ENCODE measurements at regions of chr6 and their contacts with region 1.

Region 1: DNA sequence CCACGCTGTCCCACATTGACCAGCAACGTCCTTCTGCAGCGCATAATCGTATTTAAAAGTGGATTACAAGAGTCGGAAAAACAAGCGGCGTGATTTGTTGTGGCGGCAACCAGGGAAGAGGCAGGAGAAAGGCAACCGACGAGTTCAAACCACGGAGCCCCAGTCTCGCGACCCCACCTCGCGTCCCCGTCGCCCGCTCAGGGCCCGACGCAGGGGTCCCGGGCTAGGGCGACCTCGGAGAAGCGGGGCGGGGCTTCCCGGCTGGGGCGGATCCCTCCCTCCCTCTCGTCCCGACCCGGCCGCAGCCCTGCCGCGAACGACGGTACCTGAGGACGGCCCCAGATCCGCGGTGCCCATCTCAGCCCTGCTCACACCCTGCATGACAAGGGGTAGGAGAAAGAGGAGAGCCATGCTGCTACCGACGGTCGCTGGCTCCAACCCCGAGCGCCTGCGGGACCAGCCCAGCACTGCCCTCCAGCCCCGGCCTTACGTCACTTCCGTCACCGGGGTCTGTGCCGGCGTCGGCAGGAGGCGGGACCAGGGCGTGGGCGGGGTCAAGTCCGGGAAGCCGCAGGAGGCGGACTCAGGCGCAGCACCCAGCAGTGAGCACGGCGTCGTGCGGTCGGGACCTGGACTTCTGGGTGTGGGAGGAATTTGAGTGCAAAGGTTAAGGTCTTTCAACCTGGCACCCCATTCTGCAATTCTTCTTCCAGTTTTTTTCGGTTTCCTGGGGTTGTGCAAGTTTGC is at the start of gene IFNGR1:
- DNase-seq: peak; percentile 90
- H3K4me3 ChIP-seq: peak within 1 kb of the TSS; percentile 78 to 98 (median 89)
- H3K27ac ChIP-seq: peak within 1 kb of the TSS; percentile 98
- H3K4me1 ChIP-seq: peaks cover 44% of the 10 kb centered on the region
- H3K27me3 ChIP-seq: no peaks in the 10 kb centered on the region
- CTCF ChIP-seq: no peak
- total RNA-seq, gene IFNGR1: 54.7 to 137 TPM

Region 2: DNA sequence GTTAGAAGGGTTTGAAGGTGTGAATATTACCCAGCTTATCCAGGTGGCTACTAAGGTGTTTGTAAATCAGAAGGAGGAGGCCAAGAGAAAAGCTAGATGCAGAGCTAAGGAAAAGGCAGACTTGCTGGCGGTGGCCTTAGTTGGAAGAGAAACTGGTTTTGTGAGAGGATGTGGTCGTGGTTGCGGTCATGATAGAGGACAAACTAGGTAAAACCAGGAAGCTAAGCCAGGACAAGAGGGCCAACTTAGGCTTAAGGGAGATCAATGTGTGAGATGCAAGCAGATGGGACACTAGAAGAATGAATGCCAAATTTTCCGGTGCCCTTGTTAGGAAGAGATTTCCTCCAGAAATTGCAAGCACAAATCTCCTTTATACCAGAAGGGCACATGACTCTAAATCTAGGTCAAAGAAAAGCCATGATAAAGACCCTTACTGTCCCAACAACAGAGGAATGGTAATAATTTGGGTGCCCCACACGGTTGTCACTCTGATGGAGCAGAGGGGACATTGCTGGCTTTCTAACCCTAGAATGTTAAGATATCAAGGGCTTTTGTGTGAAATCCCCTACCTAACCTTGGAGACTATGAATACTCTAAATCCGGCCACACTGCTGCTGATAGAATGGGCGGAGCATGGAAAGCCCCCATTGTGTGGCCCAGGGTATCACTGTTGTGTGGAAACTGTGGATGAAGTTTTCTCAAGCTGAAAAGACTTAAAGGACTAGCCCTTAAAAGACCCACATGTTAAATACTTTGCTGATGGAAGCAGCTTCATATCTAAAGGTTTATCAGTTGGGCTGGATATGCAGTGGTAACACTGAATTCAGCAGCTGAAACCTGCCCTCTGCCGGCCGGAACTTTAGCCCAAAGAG is 53.5 kb before region 1 on chr6:
- CTCF ChIA-PET with region 1: no interaction called
- dilution Hi-C with region 1: no loop called
- in situ Hi-C with region 1: no loop called
- intact Hi-C with region 1: loop called (anchors 2 kb)
- DNase-seq: peak; percentile 25
- H3K4me3 ChIP-seq: no peak overlapping the region
- H3K27ac ChIP-seq: no peak overlapping the region
- H3K4me1 ChIP-seq: peaks cover 16% of the 10 kb centered on the region
- H3K27me3 ChIP-seq: no peaks in the 10 kb centered on the region
- CTCF ChIP-seq: peak; percentile 34 to 58

Region 3: GRCh38 chr6:137240168-137240567 is 21.1 kb after region 1 on chr6:
- CTCF ChIA-PET with region 1: no interaction called
- dilution Hi-C with region 1: no loop called
- in situ Hi-C with region 1: no loop called
- intact Hi-C with region 1: loop called (anchors 1 kb)
- DNase-seq: peak; percentile 91
- H3K4me3 ChIP-seq: no peak overlapping the region
- H3K27ac ChIP-seq: no peak overlapping the region
- H3K4me1 ChIP-seq: peaks cover 43% of the 10 kb centered on the region
- H3K27me3 ChIP-seq: no peaks in the 10 kb centered on the region
- CTCF ChIP-seq: no peak

Region 4: GRCh38 chr6:137271245-137272183 is 52.4 kb after region 1 on chr6:
- CTCF ChIA-PET with region 1: no interaction called
- dilution Hi-C with region 1: no loop called
- in situ Hi-C with region 1: no loop called
- intact Hi-C with region 1: loop called (anchors 2 kb)
- DNase-seq: peak; percentile 41
- H3K4me3 ChIP-seq: no peak overlapping the region
- H3K27ac ChIP-seq: no peak overlapping the region
- H3K4me1 ChIP-seq: no peaks in the 10 kb centered on the region
- H3K27me3 ChIP-seq: no peaks in the 10 kb centered on the region
- CTCF ChIP-seq: peak; percentile 92 to 98

Measured in mammary epithelial cell (primary cell).